ENCODE measurements at regions of chr20 and their contacts with region 1.

Region 1: GRCh38 chr20:407133-407952 is 756 bp upstream of the RBCK1 start:
- DNase-seq: peak; percentile 67 to 84 (median 80)
- H3K4me3 ChIP-seq: peak overlapping the region; percentile 94
- H3K27ac ChIP-seq: no peak overlapping the region
- H3K4me1 ChIP-seq: peaks cover 7% of the 10 kb centered on the region
- H3K27me3 ChIP-seq: no peaks in the 10 kb centered on the region
- CTCF ChIP-seq: no peak
- EP300 ChIP-seq: no peak
- POLR2A ChIP-seq: peak; percentile 4

Region 2: DNA sequence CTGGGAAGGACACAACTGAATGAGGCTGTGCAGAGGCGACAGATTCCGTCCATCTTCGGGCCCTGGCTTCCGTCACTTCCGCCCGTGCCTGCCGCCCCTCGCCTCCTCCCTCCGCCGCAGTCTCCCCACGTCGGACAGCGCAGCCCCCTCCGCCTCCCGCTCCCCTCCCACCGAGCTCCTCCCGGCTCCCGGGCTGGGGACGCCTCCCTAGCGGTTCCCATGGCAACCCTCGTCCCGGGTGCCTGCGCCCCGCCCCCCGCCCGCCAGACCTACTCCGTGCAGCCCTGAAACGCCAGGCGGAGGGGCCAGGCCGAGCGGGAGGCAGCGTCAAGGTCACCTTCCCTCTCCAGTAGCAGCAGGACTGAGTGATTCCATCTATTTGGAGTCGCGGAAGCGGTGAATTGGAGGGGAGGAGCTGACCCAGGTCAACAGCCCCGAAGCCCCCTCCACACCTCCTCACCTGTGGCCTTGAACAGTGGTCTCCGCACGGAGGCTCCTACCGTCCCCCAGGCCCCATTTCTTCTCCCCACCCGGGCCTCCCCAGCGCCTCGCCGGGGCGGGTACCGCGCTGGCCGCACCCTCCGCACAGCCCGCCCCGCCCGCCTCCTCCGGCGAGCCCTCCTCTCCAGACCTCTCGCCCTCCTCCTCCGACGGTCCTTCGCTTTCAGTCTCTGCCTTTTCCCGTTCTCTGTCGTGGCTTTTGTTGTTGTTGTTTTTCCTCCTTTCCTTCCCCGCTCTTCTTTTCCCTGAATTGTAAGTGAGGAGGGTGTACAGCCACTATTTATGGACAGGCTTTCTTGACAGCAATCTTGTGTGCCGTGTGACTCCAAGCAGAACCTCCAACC is 59.5 kb before region 1 on chr20:
- intact Hi-C with region 1: loop called in 1 of 4 experiments (anchors 2 kb)
- DNase-seq: peak; percentile 96 to 99 (median 97)
- H3K4me3 ChIP-seq: peak overlapping the region; percentile 80
- H3K27ac ChIP-seq: peak overlapping the region; percentile 69 to 98
- H3K4me1 ChIP-seq: peaks cover 7% of the 10 kb centered on the region
- H3K27me3 ChIP-seq: no peaks in the 10 kb centered on the region
- CTCF ChIP-seq: peak in 1 of 3 donors; percentile 20
- EP300 ChIP-seq: no peak
- POLR2A ChIP-seq: peak; percentile 68

Region 3: GRCh38 chr20:431012-431904 is 23.9 kb after region 1 on chr20:
- intact Hi-C with region 1: no loop called
- DNase-seq: peak in 1 of 5 donors; percentile 55
- H3K4me3 ChIP-seq: no peak overlapping the region
- H3K27ac ChIP-seq: no peak overlapping the region
- H3K4me1 ChIP-seq: no peaks in the 10 kb centered on the region
- H3K27me3 ChIP-seq: no peaks in the 10 kb centered on the region
- CTCF ChIP-seq: no peak
- EP300 ChIP-seq: no peak
- POLR2A ChIP-seq: no peak

Region 4: DNA sequence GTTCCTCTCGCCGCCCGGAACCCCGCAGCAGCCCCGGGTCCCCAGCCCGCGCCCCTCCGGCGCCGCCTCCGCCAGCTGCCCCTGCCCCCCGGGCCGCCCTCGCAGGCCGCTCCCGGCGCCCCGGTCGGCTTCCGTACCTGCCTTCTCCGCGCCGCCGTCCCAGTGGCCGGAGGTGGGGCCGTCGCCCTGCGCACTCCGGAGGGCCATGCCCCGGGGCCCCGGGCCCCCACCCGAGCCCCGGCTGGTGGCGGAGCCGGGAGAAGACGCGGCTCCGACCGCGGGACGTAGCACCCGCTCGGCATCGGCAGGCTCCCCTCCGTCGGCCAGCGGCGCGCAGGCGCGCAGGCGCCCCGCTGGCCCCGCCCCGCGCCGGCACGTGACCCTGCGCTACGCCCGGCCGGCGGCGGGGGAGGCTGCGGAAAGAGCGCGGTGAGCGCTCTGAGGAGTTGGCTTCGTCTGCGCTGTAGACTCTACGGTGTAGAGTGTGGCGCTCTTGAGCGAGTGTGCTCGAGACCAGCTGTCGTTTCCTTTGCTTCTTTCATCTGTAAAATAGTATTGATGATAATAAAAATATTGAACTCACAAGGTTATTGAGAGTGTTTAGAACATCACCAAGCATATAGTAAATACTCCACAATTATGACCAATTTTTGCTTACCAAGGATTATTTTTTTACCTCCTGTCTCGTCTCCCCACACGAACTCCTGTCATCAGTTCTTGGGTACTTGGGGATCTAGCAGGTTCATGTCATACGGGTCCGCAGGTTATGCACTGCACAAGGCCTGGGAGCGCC is 55.1 kb after region 1 on chr20 and contains the start of gene TBC1D20:
- intact Hi-C with region 1: loop called in 1 of 4 experiments (anchors 10 kb)
- DNase-seq: peak; percentile 82 to 90 (median 87)
- H3K4me3 ChIP-seq: peak within 1 kb of the TSS; percentile 73
- H3K27ac ChIP-seq: peak within 1 kb of the TSS; percentile 79 to 91
- H3K4me1 ChIP-seq: peaks cover 6% of the 10 kb centered on the region
- H3K27me3 ChIP-seq: no peaks in the 10 kb centered on the region
- CTCF ChIP-seq: peak in 2 of 3 donors; percentile 19 to 20
- EP300 ChIP-seq: no peak
- POLR2A ChIP-seq: peak; percentile 73
- total RNA-seq, gene TBC1D20: 24.9 to 40.1 (median 34.8) TPM

Region 5: GRCh38 chr20:478949-479429 is 71.6 kb after region 1 on chr20:
- intact Hi-C with region 1: no loop called
- DNase-seq: no peak
- H3K4me3 ChIP-seq: no peak overlapping the region
- H3K27ac ChIP-seq: no peak overlapping the region
- H3K4me1 ChIP-seq: no peaks in the 10 kb centered on the region
- H3K27me3 ChIP-seq: no peaks in the 10 kb centered on the region
- CTCF ChIP-seq: peak in 2 of 3 donors; percentile 39 to 48
- EP300 ChIP-seq: no peak
- POLR2A ChIP-seq: no peak

Region 6: GRCh38 chr20:1010659-1011058 is 603.3 kb after region 1 on chr20:
- intact Hi-C with region 1: no loop called
- DNase-seq: no peak
- H3K4me3 ChIP-seq: no peak overlapping the region
- H3K27ac ChIP-seq: no peak overlapping the region
- H3K4me1 ChIP-seq: no peaks in the 10 kb centered on the region
- H3K27me3 ChIP-seq: no peaks in the 10 kb centered on the region
- CTCF ChIP-seq: no peak
- EP300 ChIP-seq: no peak
- POLR2A ChIP-seq: no peak

Region 7: GRCh38 chr20:1266167-1266973 is 859.0 kb after region 1 on chr20 and contains the start of gene SNPH:
- intact Hi-C with region 1: no loop called
- DNase-seq: peak; percentile 63 to 77 (median 71)
- H3K4me3 ChIP-seq: peak within 1 kb of the TSS; percentile 59
- H3K27ac ChIP-seq: peak within 1 kb of the TSS; percentile 1 to 43
- H3K4me1 ChIP-seq: no peaks in the 10 kb centered on the region
- H3K27me3 ChIP-seq: no peaks in the 10 kb centered on the region
- CTCF ChIP-seq: no peak
- EP300 ChIP-seq: no peak
- POLR2A ChIP-seq: no peak
- total RNA-seq, gene SNPH: 2.4 to 6.8 (median 4.1) TPM

Measured in ovary (tissue), 10 donors.